ENCODE measurements at regions of chr5 and their contacts with region 1.

Region 1: GRCh38 chr5:160008877-160009590 is at the start of gene TTC1:
- DNase-seq: peak; percentile 100
- ATAC-seq: peak; percentile 96
- H3K4me3 ChIP-seq: peak within 1 kb of the TSS; percentile 77
- H3K27ac ChIP-seq: peak within 1 kb of the TSS; percentile 62
- H3K4me1 ChIP-seq: peaks cover 1% of the 10 kb centered on the region
- H3K27me3 ChIP-seq: no peaks in the 10 kb centered on the region
- CTCF ChIP-seq: no peak
- POLR2A ChIP-seq: peak; percentile 90
- RAD21 ChIP-seq: no peak
- total RNA-seq, gene TTC1: 23.1 and 46.9 TPM in 2 replicates

Region 2: GRCh38 chr5:160369990-160370712 is 361.1 kb after region 1 on chr5 and contains the start of gene C1QTNF2:
- CTCF ChIA-PET with region 1: no interaction called
- POLR2A ChIA-PET with region 1: no interaction called
- dilution Hi-C with region 1: loop called (anchors 25 kb)
- in situ Hi-C with region 1: no loop called
- intact Hi-C with region 1: no loop called
- DNase-seq: peak; percentile 72
- ATAC-seq: peak; percentile 94
- H3K4me3 ChIP-seq: peak within 1 kb of the TSS; percentile 60
- H3K27ac ChIP-seq: peak within 1 kb of the TSS; percentile 55; the same call in 1 of the 2 replicates
- H3K4me1 ChIP-seq: 0 out of 2 replicates have a peak, but pooled peaks cover 2% of the 10 kb centered on the region
- H3K27me3 ChIP-seq: peaks cover 14% of the 10 kb centered on the region
- CTCF ChIP-seq: no peak
- POLR2A ChIP-seq: no peak
- RAD21 ChIP-seq: no peak
- total RNA-seq, gene C1QTNF2: 0.72 and 0.83 TPM in 2 replicates